PC-9 (cell line): ENCODE measurements at regions of chr5 and their contacts with region 1.

Region 1: GRCh38 chr5:107389130-107389774 is 281.5 kb downstream of the EFNA5 start:
- DNase-seq: peak; percentile 41 to 97
- H3K4me3 ChIP-seq: peak overlapping the region; percentile 2; the same call in 1 of the 2 replicates
- H3K27ac ChIP-seq: peak overlapping the region; percentile 94
- H3K4me1 ChIP-seq: peaks cover 49% of the 10 kb centered on the region
- H3K27me3 ChIP-seq: no peaks in the 10 kb centered on the region
- CTCF ChIP-seq: no peak

Region 2: DNA sequence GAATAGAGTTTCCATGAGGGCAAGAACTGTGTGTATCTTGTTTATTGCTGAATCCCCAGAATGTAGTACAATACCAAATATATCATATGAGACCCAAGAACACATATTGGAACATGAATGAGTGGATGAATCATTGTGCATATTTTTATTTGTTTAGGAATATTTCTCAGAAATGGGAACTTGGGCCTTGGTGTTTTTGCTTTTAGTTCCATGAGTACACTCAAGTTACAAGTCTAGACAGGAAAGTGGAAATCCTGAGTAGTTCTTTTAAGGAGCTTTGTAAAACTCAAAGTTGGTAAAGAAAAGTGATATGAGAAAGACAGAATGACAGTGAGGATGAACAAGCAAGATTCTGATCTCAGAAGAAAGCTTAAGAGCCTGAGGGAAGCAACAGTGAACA is 365.5 kb before region 1 on chr5:
- CTCF ChIA-PET with region 1: no interaction called
- POLR2A ChIA-PET with region 1: no interaction called
- intact Hi-C with region 1: no loop called
- DNase-seq: no peak
- H3K4me3 ChIP-seq: no peak overlapping the region
- H3K27ac ChIP-seq: no peak overlapping the region
- H3K4me1 ChIP-seq: no peaks in the 10 kb centered on the region
- H3K27me3 ChIP-seq: no peaks in the 10 kb centered on the region
- CTCF ChIP-seq: no peak

Region 3: DNA sequence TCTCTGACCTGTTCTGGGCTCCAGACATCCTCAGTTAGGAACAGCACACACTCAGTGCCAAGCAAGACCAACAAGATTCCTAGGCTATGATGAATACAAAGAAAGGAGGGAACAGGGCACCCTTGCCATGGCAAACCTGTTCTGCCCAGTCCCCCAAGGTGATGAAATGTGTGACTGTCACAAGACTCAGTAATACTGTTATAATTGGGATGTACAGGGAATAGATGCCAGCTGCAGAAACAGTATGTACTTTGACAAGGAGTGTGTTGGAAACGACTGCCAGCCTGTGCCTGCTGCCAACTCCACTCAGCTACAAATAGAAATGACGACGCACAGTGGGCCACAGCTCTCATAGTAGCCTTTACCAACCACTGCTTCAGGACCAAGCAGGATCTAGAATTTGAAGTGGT is 171.5 kb before region 1 on chr5:
- CTCF ChIA-PET with region 1: no interaction called
- POLR2A ChIA-PET with region 1: no interaction called
- intact Hi-C with region 1: loop called (anchors 5 kb)
- DNase-seq: peak; percentile 76 to 96
- H3K4me3 ChIP-seq: peak overlapping the region; percentile 45; the same call in 1 of the 2 replicates
- H3K27ac ChIP-seq: peak overlapping the region; percentile 96
- H3K4me1 ChIP-seq: peaks cover 53% of the 10 kb centered on the region
- H3K27me3 ChIP-seq: no peaks in the 10 kb centered on the region
- CTCF ChIP-seq: no peak

Region 4: DNA sequence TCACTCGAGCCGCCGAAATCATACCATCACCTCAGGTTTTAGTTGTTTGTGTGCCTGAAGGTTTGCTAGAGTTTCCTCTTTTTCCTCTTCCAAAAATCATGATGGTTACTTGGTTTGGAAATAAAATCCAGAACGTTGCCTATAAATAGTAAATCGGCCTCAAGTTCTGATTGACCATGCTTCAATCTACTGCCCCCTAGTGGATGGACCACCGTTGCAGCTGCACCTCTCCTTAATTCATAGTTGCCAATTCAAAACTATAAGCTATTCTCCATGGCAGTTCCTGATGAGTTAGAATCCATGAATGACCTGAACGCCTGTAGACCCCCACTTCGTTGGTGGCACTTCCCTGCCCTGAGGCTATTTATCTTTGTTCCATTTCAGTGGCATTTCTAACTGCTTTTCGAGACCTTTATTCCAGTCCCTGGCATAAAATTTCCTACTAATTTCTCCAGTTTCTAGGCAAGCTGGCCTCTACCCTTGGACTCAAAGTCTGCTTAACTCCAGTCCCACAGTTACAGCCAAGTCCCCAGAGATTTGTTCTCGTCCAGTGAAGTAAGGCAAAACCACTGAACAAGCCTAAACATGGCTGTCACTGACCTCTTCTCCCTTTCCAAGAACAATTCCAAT is 141.1 kb before region 1 on chr5:
- CTCF ChIA-PET with region 1: no interaction called
- POLR2A ChIA-PET with region 1: no interaction called
- intact Hi-C with region 1: loop called (anchors 5 kb)
- DNase-seq: peak; percentile 40 to 52
- H3K4me3 ChIP-seq: no peak overlapping the region
- H3K27ac ChIP-seq: no peak overlapping the region
- H3K4me1 ChIP-seq: no peaks in the 10 kb centered on the region
- H3K27me3 ChIP-seq: no peaks in the 10 kb centered on the region
- CTCF ChIP-seq: peak; percentile 89

Region 5: DNA sequence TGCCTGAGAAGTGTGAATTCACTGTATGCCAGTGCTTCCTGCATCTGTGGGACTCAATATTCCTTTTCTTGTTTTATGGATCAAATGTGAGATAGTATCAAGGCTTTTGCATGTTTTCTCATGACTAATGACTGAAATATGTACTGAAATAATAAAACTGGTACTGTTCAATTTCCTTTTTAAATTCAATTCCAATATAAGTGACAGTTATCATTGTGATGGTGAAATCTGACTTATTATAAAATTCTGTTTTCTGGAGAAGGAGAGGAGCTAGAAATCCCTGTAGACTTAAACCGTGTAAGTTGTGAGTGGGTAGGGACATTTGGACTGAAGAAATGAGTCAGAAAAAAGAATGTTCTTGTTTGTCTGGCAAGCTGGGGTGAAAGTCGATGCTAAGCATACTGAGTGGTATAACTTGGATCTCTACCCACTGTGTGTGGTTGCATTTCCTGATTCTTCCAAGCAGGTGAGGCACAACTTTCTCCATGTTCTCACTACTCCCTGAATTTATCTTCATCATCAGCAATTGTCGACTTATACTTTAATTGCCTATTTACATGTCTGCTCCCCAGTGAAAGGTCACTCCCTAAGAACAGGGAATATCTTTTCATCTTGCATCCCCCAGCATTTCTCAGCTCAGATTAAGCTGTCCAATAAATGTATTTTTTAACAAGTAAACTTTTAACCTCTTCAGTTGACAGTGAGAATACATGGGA is 36.4 kb after region 1 on chr5:
- CTCF ChIA-PET with region 1: no interaction called
- POLR2A ChIA-PET with region 1: no interaction called
- intact Hi-C with region 1: loop called (anchors 1 kb)
- DNase-seq: peak; percentile 43 to 89
- H3K4me3 ChIP-seq: no peak overlapping the region; the same call in 1 of the 2 replicates
- H3K27ac ChIP-seq: peak overlapping the region; percentile 85
- H3K4me1 ChIP-seq: peaks cover 68% of the 10 kb centered on the region
- H3K27me3 ChIP-seq: no peaks in the 10 kb centered on the region
- CTCF ChIP-seq: no peak

Region 6: GRCh38 chr5:107542428-107542827 is 153.2 kb after region 1 on chr5:
- CTCF ChIA-PET with region 1: no interaction called
- POLR2A ChIA-PET with region 1: interaction called, 8 read pairs
- intact Hi-C with region 1: loop called (anchors 2 kb)
- DNase-seq: peak; percentile 88 to 97
- H3K4me3 ChIP-seq: peak overlapping the region; percentile 26; the same call in 1 of the 2 replicates
- H3K27ac ChIP-seq: peak overlapping the region; percentile 93
- H3K4me1 ChIP-seq: peaks cover 59% of the 10 kb centered on the region
- H3K27me3 ChIP-seq: no peaks in the 10 kb centered on the region
- CTCF ChIP-seq: no peak

Region 7: DNA sequence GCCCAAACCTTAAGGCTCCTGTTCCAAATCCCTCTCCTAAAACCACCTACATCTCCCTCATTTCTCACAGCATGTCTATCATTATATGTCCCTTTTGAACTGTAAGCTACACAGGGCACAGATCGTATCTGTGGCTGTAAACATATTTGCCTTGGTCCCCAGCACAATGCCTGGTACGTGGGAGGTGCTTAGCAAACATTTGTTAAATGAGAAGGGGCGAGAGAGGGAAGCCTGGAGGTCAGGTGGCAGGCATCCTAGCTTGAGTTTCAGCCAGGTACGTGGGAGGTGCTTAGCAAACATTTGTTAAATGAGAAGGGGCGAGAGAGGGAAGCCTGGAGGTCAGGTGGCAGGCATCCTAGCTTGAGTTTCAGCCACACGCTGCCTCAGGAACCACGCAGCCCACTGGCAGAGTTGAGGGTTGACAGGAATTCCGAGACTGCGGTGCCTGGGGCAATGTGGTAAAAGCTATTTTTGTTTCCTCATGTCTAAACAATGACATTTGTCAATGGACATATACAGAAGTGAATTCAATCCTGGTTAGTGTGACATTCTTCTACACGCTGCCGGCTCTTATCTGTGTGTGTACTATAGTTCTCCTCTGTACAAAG is 167.9 kb after region 1 on chr5:
- CTCF ChIA-PET with region 1: no interaction called
- POLR2A ChIA-PET with region 1: interaction called, 6 read pairs
- intact Hi-C with region 1: loop called (anchors 1 kb)
- DNase-seq: peak; percentile 95 to 99
- H3K4me3 ChIP-seq: peak overlapping the region; percentile 38; the same call in 1 of the 2 replicates
- H3K27ac ChIP-seq: peak overlapping the region; percentile 96
- H3K4me1 ChIP-seq: peaks cover 65% of the 10 kb centered on the region
- H3K27me3 ChIP-seq: no peaks in the 10 kb centered on the region
- CTCF ChIP-seq: no peak